GM12878 (cell line): ENCODE measurements at regions of chr7 and their contacts with region 1.

Region 1: GRCh38 chr7:139075031-139075652 is 34.4 kb downstream of the ZC3HAV1 start:
- DNase-seq: peak; percentile 45
- ATAC-seq: peak; percentile 98
- H3K4me3 ChIP-seq: no peak overlapping the region
- H3K27ac ChIP-seq: no peak overlapping the region; the same call in 1 of the 2 replicates
- H3K4me1 ChIP-seq: peaks cover 7% of the 10 kb centered on the region; the same call in 1 of the 2 replicates
- H3K27me3 ChIP-seq: no peaks in the 10 kb centered on the region
- CTCF ChIP-seq: peak; percentile 68 to 85 (median 79)
- EP300 ChIP-seq: no peak
- POLR2A ChIP-seq: no peak
- RAD21 ChIP-seq: peak; percentile 72

Region 2: GRCh38 chr7:139016931-139017511 is 58.1 kb before region 1 on chr7:
- CTCF ChIA-PET with region 1: interaction called, 57 read pairs
- POLR2A ChIA-PET with region 1: no interaction called
- RAD21 ChIA-PET with region 1: interaction called, 27 read pairs
- SMC1A ChIA-PET with region 1: interaction called, 15 read pairs
- in situ Hi-C with region 1: no loop called
- intact Hi-C with region 1: loop called (anchors 1 kb)
- DNase-seq: no peak
- ATAC-seq: peak; percentile 99
- H3K4me3 ChIP-seq: no peak overlapping the region
- H3K27ac ChIP-seq: no peak overlapping the region
- H3K4me1 ChIP-seq: no peaks in the 10 kb centered on the region
- H3K27me3 ChIP-seq: no peaks in the 10 kb centered on the region
- CTCF ChIP-seq: peak; percentile 76 to 81 (median 79)
- EP300 ChIP-seq: no peak
- POLR2A ChIP-seq: no peak
- RAD21 ChIP-seq: peak; percentile 66

Region 3: GRCh38 chr7:139049936-139050335 is 25.2 kb before region 1 on chr7:
- CTCF ChIA-PET with region 1: interaction called, 14 read pairs
- POLR2A ChIA-PET with region 1: interaction called, 3 read pairs
- RAD21 ChIA-PET with region 1: no interaction called
- SMC1A ChIA-PET with region 1: interaction called, 4 read pairs
- in situ Hi-C with region 1: no loop called
- intact Hi-C with region 1: no loop called
- DNase-seq: no peak
- ATAC-seq: no peak
- H3K4me3 ChIP-seq: no peak overlapping the region
- H3K27ac ChIP-seq: no peak overlapping the region
- H3K4me1 ChIP-seq: no peaks in the 10 kb centered on the region; the same call in 1 of the 2 replicates
- H3K27me3 ChIP-seq: no peaks in the 10 kb centered on the region
- CTCF ChIP-seq: no peak
- EP300 ChIP-seq: no peak
- POLR2A ChIP-seq: no peak
- RAD21 ChIP-seq: no peak

Region 4: DNA sequence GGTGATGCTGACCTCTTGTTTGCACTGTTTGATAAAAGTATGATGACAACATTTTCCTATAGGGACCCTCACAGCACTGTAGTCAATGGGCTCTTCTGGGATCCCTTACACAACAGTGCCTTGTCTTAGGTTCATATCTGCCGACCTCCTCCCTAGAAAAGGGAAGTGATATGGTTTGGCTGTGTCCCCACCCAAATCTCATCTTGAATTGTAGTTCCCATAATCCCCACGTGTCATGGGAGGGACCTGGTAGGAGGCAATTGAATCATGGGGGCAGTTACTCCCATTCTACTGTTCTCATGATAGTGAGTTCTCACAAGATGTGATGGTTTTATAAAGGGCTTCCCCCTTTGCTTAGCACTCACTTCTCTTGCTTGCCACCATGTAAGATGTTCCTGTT is 11.3 kb after region 1 on chr7:
- CTCF ChIA-PET with region 1: interaction called, 23 read pairs
- POLR2A ChIA-PET with region 1: no interaction called
- RAD21 ChIA-PET with region 1: no interaction called
- SMC1A ChIA-PET with region 1: interaction called, 7 read pairs
- in situ Hi-C with region 1: no loop called
- intact Hi-C with region 1: no loop called
- DNase-seq: no peak
- ATAC-seq: no peak
- H3K4me3 ChIP-seq: no peak overlapping the region
- H3K27ac ChIP-seq: no peak overlapping the region
- H3K4me1 ChIP-seq: no peaks in the 10 kb centered on the region
- H3K27me3 ChIP-seq: no peaks in the 10 kb centered on the region
- CTCF ChIP-seq: no peak
- EP300 ChIP-seq: no peak
- POLR2A ChIP-seq: no peak
- RAD21 ChIP-seq: no peak

Region 5: DNA sequence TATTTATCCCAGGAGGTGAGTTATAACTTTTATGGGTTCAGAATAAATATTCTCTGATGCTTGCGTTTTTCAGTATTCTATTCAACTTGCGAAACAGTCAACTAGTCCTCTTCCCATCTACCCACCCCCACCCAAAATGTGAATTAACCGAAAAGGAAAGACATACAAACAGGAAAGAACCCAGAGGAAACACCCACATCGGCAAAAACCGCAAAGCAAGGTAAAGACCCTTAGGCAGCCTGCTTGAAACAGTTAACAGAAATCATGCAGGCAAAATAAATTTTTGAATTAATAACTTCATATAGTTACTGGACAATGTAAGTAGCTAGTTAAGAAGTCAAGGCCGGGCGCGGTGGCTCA is 28.9 kb after region 1 on chr7:
- CTCF ChIA-PET with region 1: interaction called, 15 read pairs
- POLR2A ChIA-PET with region 1: no interaction called
- RAD21 ChIA-PET with region 1: interaction called, 5 read pairs
- SMC1A ChIA-PET with region 1: no interaction called
- in situ Hi-C with region 1: no loop called
- intact Hi-C with region 1: no loop called
- DNase-seq: no peak
- ATAC-seq: peak; percentile 7
- H3K4me3 ChIP-seq: peak overlapping the region; percentile 72
- H3K27ac ChIP-seq: peak overlapping the region; percentile 74
- H3K4me1 ChIP-seq: peaks cover 3% of the 10 kb centered on the region; the same call in 1 of the 2 replicates
- H3K27me3 ChIP-seq: no peaks in the 10 kb centered on the region
- CTCF ChIP-seq: no peak
- EP300 ChIP-seq: no peak
- POLR2A ChIP-seq: no peak
- RAD21 ChIP-seq: no peak

Region 6: DNA sequence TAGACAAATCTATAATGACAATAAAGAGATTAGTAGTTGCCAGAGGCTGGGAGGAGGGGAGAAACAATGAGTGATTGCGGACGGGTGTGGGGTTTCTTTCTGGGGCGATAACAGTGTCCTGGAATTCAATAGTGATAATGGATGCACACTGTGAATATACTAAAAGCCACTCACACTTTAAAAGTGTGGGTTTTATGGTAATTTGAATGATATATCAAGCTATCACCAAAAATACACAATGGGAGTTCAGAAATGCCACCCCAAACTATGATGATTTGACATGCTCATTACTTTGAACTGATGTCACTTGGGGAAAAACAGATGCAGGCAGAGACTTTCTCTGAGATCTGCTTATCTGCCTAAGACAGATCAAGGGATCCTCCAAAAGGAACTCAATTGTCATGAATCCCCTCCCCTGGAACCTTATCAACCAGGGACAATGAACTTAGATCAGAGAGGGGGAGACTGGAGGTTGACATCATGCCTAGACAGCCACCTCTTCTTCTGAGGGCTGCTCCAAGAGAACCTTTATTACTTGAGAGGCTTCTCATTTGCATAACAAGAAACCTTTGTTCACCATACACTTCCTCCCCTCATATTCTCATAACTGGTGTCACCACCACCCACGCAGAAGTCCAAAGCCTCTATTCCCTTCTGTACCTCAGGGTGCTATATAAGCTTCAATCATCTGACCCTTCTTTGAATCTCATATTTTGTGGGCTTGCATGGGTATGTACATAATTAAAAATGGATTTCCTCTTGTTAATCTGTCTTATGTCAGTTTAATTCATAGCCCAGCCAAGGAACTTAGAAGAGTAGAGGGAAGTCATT is 49.2 kb after region 1 on chr7:
- CTCF ChIA-PET with region 1: interaction called, 12 read pairs
- POLR2A ChIA-PET with region 1: no interaction called
- RAD21 ChIA-PET with region 1: interaction called, 3 read pairs
- SMC1A ChIA-PET with region 1: interaction called, 6 read pairs
- in situ Hi-C with region 1: no loop called
- intact Hi-C with region 1: no loop called
- DNase-seq: no peak
- ATAC-seq: peak; percentile 69
- H3K4me3 ChIP-seq: no peak overlapping the region
- H3K27ac ChIP-seq: no peak overlapping the region
- H3K4me1 ChIP-seq: peaks cover 25% of the 10 kb centered on the region
- H3K27me3 ChIP-seq: no peaks in the 10 kb centered on the region
- CTCF ChIP-seq: no peak
- EP300 ChIP-seq: no peak
- POLR2A ChIP-seq: no peak
- RAD21 ChIP-seq: no peak